Heart left ventricle (tissue), 16 donors: ENCODE measurements at regions of chr16 and their contacts with region 1.

Region 1: GRCh38 chr16:69565671-69566239 is at the start of gene NFAT5:
- DNase-seq: peak; percentile 90 to 95 (median 90)
- ATAC-seq: peak; percentile 84 to 94 (median 90)
- H3K4me3 ChIP-seq: peak within 1 kb of the TSS; percentile 66 to 98 (median 94)
- H3K27ac ChIP-seq: peak within 1 kb of the TSS; percentile 88 to 100 (median 98)
- H3K4me1 ChIP-seq: peaks cover 0 to 55% (median 27%) of the 10 kb centered on the region in 12 donors
- H3K27me3 ChIP-seq: no peaks in the 10 kb centered on the region
- CTCF ChIP-seq: peak in 5 of 12 donors; percentile 17 to 33 (median 25)
- POLR2A ChIP-seq: peak in 1 of 2 donors; percentile 83
- total RNA-seq, gene NFAT5: 13.6 to 30.5 (median 23.9) TPM

Region 2: DNA sequence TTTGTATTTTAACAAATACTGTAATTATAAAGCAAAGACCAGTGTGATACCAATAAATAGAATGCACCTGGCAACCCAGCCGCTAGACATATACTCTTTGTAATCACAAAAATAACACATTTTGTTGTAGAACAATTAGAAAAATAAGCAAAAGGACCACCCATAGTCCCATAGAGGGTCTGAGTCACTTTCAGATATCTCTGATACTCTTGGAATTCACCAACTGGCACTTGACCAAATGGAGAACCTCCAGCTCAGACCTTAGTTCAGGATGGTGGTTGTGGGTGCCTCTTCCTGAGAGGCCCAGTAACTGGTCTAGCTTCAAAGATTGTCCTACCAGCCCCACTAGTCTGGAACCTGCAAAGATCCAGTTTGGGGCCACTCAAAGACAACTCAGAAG is 179.2 kb before region 1 on chr16:
- intact Hi-C with region 1: loop called in 1 of 10 experiments (anchors 5 kb)
- DNase-seq: no peak
- ATAC-seq: no peak
- H3K4me3 ChIP-seq: peak overlapping the region in 7 of 12 donors; percentile 68 to 80 (median 73)
- H3K27ac ChIP-seq: peak overlapping the region in 5 of 12 donors; percentile 90 to 93 (median 92)
- H3K4me1 ChIP-seq: peaks cover 0 to 24% (median 15%) of the 10 kb centered on the region in 12 donors
- H3K27me3 ChIP-seq: no peaks in the 10 kb centered on the region
- CTCF ChIP-seq: no peak
- POLR2A ChIP-seq: no peak

Region 3: GRCh38 chr16:69424053-69424934 is 141.5 kb before region 1 on chr16 and contains the start of gene CYB5B:
- intact Hi-C with region 1: loop called in 7 of 10 experiments (anchors 2 to 10 kb)
- DNase-seq: peak; percentile 91 to 96 (median 95)
- ATAC-seq: peak; percentile 99 to 100 (median 99)
- H3K4me3 ChIP-seq: peak within 1 kb of the TSS; percentile 64 to 91 (median 76)
- H3K27ac ChIP-seq: peak within 1 kb of the TSS; percentile 54 to 86 (median 80)
- H3K4me1 ChIP-seq: peaks cover 0 to 17% (median 11%) of the 10 kb centered on the region in 12 donors
- H3K27me3 ChIP-seq: no peaks in the 10 kb centered on the region
- CTCF ChIP-seq: peak in 1 of 12 donors; percentile 3
- POLR2A ChIP-seq: peak in 1 of 2 donors; percentile 66
- total RNA-seq, gene CYB5B: 31.1 to 89.2 (median 65.0) TPM

Region 4: DNA sequence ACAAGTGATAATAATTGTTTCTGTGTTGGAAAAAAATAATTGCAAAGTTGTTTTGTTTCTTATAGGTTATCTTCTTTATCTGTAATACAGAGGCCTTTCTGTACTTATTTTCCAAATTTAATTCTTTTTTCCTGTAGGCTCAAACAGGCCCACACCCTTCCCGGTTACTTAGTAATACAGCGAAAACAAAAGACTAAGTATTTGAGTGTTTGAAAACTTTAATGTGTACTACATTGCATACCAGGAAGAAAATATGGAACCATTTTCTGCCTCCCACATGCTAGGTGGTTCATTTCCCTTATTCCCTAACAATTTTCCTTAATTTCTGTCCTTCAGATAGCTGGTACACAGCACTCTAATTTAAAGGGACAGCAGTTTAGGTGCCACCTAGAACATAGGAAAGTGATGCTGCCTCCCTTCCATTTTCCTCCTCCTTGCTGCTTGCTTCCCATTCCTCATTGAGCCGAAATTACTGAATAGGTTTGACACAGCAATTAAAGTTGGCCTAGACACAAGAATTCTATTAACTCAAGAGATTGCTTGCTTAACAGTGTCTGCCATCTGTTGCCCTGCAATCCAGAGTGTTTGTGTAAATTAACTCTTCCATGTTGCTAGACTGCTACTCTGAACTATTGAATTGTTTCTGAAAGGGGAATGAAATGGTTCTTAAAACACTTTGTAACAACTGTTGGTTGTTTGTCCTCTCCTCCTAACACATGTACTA is 117.1 kb before region 1 on chr16:
- intact Hi-C with region 1: no loop called
- DNase-seq: no peak
- ATAC-seq: peak in 2 of 4 donors; percentile 32 to 33
- H3K4me3 ChIP-seq: no peak overlapping the region
- H3K27ac ChIP-seq: peak overlapping the region; percentile 41 to 83 (median 57)
- H3K4me1 ChIP-seq: peaks cover 0 to 55% (median 34%) of the 10 kb centered on the region in 12 donors
- H3K27me3 ChIP-seq: no peaks in the 10 kb centered on the region
- CTCF ChIP-seq: no peak
- POLR2A ChIP-seq: no peak

Region 5: GRCh38 chr16:69494993-69495392 is 70.8 kb before region 1 on chr16:
- intact Hi-C with region 1: loop called in 1 of 10 experiments (anchors 5 kb)
- DNase-seq: no peak
- ATAC-seq: no peak
- H3K4me3 ChIP-seq: no peak overlapping the region
- H3K27ac ChIP-seq: no peak overlapping the region
- H3K4me1 ChIP-seq: no peaks in the 10 kb centered on the region
- H3K27me3 ChIP-seq: peaks cover 0 to 8% (median 0%) of the 10 kb centered on the region in 9 donors
- CTCF ChIP-seq: peak in 6 of 12 donors; percentile 8 to 30 (median 15)
- POLR2A ChIP-seq: no peak

Region 6: DNA sequence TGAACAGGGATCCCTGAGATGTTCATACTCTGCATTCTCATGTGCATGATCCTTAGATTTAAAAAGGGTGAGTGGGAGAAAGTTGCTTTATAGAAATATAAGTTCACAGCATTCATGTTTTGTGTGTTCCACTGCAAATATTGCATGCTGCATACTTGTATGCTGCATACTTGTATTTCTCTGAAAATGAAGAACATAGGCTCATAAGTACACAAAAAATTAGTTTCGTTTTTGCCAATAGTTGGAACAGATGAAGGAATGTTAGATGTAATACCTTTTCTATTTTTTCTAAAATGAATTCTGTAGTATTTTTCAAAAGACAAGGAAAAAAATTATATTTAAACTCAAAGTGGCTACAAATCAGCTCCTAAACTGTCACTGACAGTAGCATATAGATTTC is 79.0 kb after region 1 on chr16:
- intact Hi-C with region 1: loop called in 1 of 10 experiments (anchors 5 kb)
- DNase-seq: no peak
- ATAC-seq: no peak
- H3K4me3 ChIP-seq: no peak overlapping the region
- H3K27ac ChIP-seq: no peak overlapping the region
- H3K4me1 ChIP-seq: peaks cover 0 to 11% (median 0%) of the 10 kb centered on the region in 12 donors
- H3K27me3 ChIP-seq: no peaks in the 10 kb centered on the region
- CTCF ChIP-seq: no peak
- POLR2A ChIP-seq: no peak

Region 7: GRCh38 chr16:69726296-69727060 is 160.7 kb after region 1 on chr16 and contains the start of gene NQO1:
- intact Hi-C with region 1: no loop called
- DNase-seq: peak; percentile 90 to 96 (median 94)
- ATAC-seq: peak; percentile 96 to 98 (median 98)
- H3K4me3 ChIP-seq: peak within 1 kb of the TSS; percentile 14 to 72 (median 56)
- H3K27ac ChIP-seq: peak within 1 kb of the TSS; percentile 55 to 88 (median 79)
- H3K4me1 ChIP-seq: peaks cover 0 to 33% (median 19%) of the 10 kb centered on the region in 12 donors
- H3K27me3 ChIP-seq: no peaks in the 10 kb centered on the region
- CTCF ChIP-seq: no peak
- POLR2A ChIP-seq: peak in 1 of 2 donors; percentile 66
- total RNA-seq, gene NQO1: 7.6 to 76.8 (median 12.8) TPM

Region 8: GRCh38 chr16:69859105-69859989 is 293.6 kb after region 1 on chr16:
- intact Hi-C with region 1: loop called in 1 of 10 experiments (anchors 10 kb)
- DNase-seq: peak in 4 of 5 donors; percentile 47 to 72 (median 59)
- ATAC-seq: peak; percentile 80 to 88 (median 82)
- H3K4me3 ChIP-seq: no peak overlapping the region
- H3K27ac ChIP-seq: peak overlapping the region; percentile 58 to 95 (median 88)
- H3K4me1 ChIP-seq: peaks cover 0 to 59% (median 35%) of the 10 kb centered on the region in 12 donors
- H3K27me3 ChIP-seq: no peaks in the 10 kb centered on the region
- CTCF ChIP-seq: peak in 11 of 12 donors; percentile 13 to 58 (median 35)
- POLR2A ChIP-seq: no peak